ENCODE measurements at regions of chr11 and their contacts with region 1.

Region 1: GRCh38 chr11:45560155-45560912 is 105.1 kb downstream of the CHST1 start:
- DNase-seq: no peak
- H3K4me3 ChIP-seq: no peak overlapping the region
- H3K4me3 Mint-ChIP-seq: no peak overlapping the region
- H3K27ac Mint-ChIP-seq: no peak overlapping the region
- H3K4me1 ChIP-seq: no peaks in the 10 kb centered on the region
- H3K4me1 Mint-ChIP-seq: peaks cover 9% of the 10 kb centered on the region
- H3K27me3 ChIP-seq: no peaks in the 10 kb centered on the region; the same call in 1 of the 2 replicates
- H3K27me3 Mint-ChIP-seq: peaks cover 29% of the 10 kb centered on the region
- CTCF ChIP-seq: no peak

Region 2: GRCh38 chr11:45423475-45424120 is 136.7 kb before region 1 on chr11:
- CTCF ChIA-PET with region 1: no interaction called
- POLR2A ChIA-PET with region 1: no interaction called
- intact Hi-C with region 1: no loop called
- DNase-seq: no peak
- H3K4me3 ChIP-seq: no peak overlapping the region
- H3K4me3 Mint-ChIP-seq: no peak overlapping the region
- H3K27ac Mint-ChIP-seq: no peak overlapping the region
- H3K4me1 ChIP-seq: no peaks in the 10 kb centered on the region
- H3K4me1 Mint-ChIP-seq: no peaks in the 10 kb centered on the region
- H3K27me3 ChIP-seq: peaks cover 4% of the 10 kb centered on the region
- H3K27me3 Mint-ChIP-seq: peaks cover 21% of the 10 kb centered on the region
- CTCF ChIP-seq: no peak

Region 3: DNA sequence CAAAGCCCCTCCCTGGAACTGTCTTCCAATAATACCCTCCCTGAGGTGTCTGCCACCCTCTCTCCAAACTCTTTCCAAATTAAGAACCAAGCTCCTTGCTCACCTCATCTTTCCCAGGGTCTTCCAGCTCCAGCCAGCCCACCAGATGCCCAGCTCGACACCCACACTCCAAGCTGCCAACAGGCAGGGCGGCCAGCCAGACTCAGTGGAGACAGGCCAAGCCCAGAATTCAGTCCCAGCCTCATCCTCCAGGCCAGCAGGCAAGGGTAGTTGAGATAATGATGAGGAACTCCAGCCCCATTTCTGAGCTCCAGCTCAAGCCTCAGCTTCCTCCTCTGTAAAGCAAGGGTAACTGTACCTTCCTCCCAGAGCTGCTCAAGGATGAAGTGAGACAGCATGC is 27.8 kb before region 1 on chr11:
- CTCF ChIA-PET with region 1: no interaction called
- POLR2A ChIA-PET with region 1: no interaction called
- intact Hi-C with region 1: loop called (anchors 2 kb)
- DNase-seq: no peak
- H3K4me3 ChIP-seq: no peak overlapping the region
- H3K4me3 Mint-ChIP-seq: no peak overlapping the region
- H3K27ac Mint-ChIP-seq: no peak overlapping the region
- H3K4me1 ChIP-seq: no peaks in the 10 kb centered on the region
- H3K4me1 Mint-ChIP-seq: no peaks in the 10 kb centered on the region
- H3K27me3 ChIP-seq: no peaks in the 10 kb centered on the region
- H3K27me3 Mint-ChIP-seq: peaks cover 17% of the 10 kb centered on the region
- CTCF ChIP-seq: no peak